IMR-90 (cell line): ENCODE measurements at regions of chr15 and their contacts with region 1.

Region 1: GRCh38 chr15:70488002-70488605 is 275.3 kb downstream of the UACA start:
- DNase-seq: peak; percentile 67
- ATAC-seq: peak; percentile 70
- H3K4me3 ChIP-seq: no peak overlapping the region
- H3K27ac ChIP-seq: no peak overlapping the region
- H3K4me1 ChIP-seq: peaks cover 32% of the 10 kb centered on the region
- H3K27me3 ChIP-seq: peaks cover 13% of the 10 kb centered on the region
- CTCF ChIP-seq: peak; percentile 95
- POLR2A ChIP-seq: 0 out of 2 replicates have a peak, but pooled peaks have one; percentile 50
- RAD21 ChIP-seq: peak; percentile 97

Region 2: DNA sequence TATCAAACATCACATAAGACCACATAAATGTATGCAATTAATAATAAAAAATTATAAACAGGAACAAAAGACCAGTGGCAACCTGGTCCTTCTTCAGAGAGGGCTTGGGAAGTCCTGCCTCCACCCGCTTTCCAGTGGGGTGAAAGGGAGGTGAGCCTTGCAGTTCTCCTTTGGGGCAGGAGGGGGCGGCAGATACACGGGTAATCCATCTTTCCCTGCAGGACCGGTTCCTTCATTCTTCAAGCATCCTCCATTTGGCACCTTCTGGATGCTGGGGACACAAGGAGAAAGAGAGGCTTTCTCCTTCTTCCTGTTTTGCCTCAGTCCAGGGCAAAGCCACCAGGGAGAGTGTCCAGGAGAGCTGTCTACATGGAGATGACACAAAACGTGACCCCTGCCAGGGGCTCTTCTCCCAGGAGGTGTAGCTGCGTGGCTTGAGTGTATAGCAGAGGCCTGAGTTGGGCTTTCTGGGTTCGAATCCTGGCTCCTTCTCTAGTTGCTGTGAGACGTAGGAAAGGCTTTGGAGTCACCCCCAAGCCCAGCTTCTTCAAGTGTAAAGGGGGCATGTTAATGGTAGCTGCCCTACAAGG is 1012.2 kb before region 1 on chr15:
- CTCF ChIA-PET with region 1: no interaction called
- POLR2A ChIA-PET with region 1: no interaction called
- dilution Hi-C with region 1: no loop called
- in situ Hi-C with region 1: loop called (anchors 10 kb)
- intact Hi-C with region 1: loop called (anchors 1 kb)
- DNase-seq: peak; percentile 63
- ATAC-seq: peak; percentile 93
- H3K4me3 ChIP-seq: no peak overlapping the region
- H3K27ac ChIP-seq: no peak overlapping the region
- H3K4me1 ChIP-seq: peaks cover 9% of the 10 kb centered on the region
- H3K27me3 ChIP-seq: peaks cover 11% of the 10 kb centered on the region
- CTCF ChIP-seq: peak; percentile 92
- POLR2A ChIP-seq: no peak
- RAD21 ChIP-seq: peak; percentile 94

Region 3: GRCh38 chr15:69523010-69524001 is 964.8 kb before region 1 on chr15:
- CTCF ChIA-PET with region 1: interaction called, 3 read pairs
- POLR2A ChIA-PET with region 1: no interaction called
- dilution Hi-C with region 1: no loop called
- in situ Hi-C with region 1: no loop called
- intact Hi-C with region 1: loop called (anchors 1 kb)
- DNase-seq: peak; percentile 72
- ATAC-seq: peak; percentile 98
- H3K4me3 ChIP-seq: no peak overlapping the region
- H3K27ac ChIP-seq: no peak overlapping the region
- H3K4me1 ChIP-seq: no peaks in the 10 kb centered on the region
- H3K27me3 ChIP-seq: peaks cover 25% of the 10 kb centered on the region
- CTCF ChIP-seq: peak; percentile 83
- POLR2A ChIP-seq: no peak
- RAD21 ChIP-seq: peak; percentile 90

Region 4: DNA sequence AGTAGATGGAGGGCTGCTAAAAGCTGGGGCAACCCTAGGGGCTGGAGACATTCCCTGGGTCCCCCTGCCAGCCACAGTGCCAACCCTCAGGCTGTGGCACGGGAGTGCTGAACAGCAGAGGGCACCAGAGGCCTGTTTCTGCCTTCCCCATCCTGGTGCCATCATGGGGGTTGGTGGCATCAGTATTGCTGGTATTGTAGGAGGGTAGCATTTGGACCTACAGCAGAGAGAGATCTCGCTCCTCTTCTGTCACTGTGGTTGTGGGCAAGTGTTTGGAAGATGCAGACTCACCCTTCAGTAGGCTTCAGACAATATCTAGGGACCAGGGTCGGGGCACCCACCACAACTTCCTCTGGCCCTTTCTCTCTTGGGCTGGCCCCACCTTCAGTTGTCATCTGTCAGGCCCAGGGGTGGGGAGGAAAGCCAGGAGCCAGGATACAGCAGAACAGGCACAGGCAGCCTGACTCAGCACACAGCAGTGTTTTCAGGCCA is 912.0 kb before region 1 on chr15:
- CTCF ChIA-PET with region 1: no interaction called
- POLR2A ChIA-PET with region 1: no interaction called
- dilution Hi-C with region 1: no loop called
- in situ Hi-C with region 1: loop called (anchors 10 kb)
- intact Hi-C with region 1: loop called (anchors 2 kb)
- DNase-seq: no peak
- ATAC-seq: peak; percentile 74
- H3K4me3 ChIP-seq: no peak overlapping the region
- H3K27ac ChIP-seq: no peak overlapping the region
- H3K4me1 ChIP-seq: no peaks in the 10 kb centered on the region
- H3K27me3 ChIP-seq: peaks cover 65% of the 10 kb centered on the region
- CTCF ChIP-seq: peak; percentile 59
- POLR2A ChIP-seq: no peak
- RAD21 ChIP-seq: peak; percentile 74

Region 5: GRCh38 chr15:69729161-69729748 is 758.8 kb before region 1 on chr15:
- CTCF ChIA-PET with region 1: no interaction called
- POLR2A ChIA-PET with region 1: no interaction called
- dilution Hi-C with region 1: no loop called
- in situ Hi-C with region 1: loop called (anchors 10 kb)
- intact Hi-C with region 1: loop called (anchors 1 kb)
- DNase-seq: peak; percentile 8
- ATAC-seq: no peak
- H3K4me3 ChIP-seq: no peak overlapping the region
- H3K27ac ChIP-seq: no peak overlapping the region
- H3K4me1 ChIP-seq: no peaks in the 10 kb centered on the region
- H3K27me3 ChIP-seq: peaks cover 56% of the 10 kb centered on the region
- CTCF ChIP-seq: peak; percentile 73
- POLR2A ChIP-seq: no peak
- RAD21 ChIP-seq: peak; percentile 79

Region 6: DNA sequence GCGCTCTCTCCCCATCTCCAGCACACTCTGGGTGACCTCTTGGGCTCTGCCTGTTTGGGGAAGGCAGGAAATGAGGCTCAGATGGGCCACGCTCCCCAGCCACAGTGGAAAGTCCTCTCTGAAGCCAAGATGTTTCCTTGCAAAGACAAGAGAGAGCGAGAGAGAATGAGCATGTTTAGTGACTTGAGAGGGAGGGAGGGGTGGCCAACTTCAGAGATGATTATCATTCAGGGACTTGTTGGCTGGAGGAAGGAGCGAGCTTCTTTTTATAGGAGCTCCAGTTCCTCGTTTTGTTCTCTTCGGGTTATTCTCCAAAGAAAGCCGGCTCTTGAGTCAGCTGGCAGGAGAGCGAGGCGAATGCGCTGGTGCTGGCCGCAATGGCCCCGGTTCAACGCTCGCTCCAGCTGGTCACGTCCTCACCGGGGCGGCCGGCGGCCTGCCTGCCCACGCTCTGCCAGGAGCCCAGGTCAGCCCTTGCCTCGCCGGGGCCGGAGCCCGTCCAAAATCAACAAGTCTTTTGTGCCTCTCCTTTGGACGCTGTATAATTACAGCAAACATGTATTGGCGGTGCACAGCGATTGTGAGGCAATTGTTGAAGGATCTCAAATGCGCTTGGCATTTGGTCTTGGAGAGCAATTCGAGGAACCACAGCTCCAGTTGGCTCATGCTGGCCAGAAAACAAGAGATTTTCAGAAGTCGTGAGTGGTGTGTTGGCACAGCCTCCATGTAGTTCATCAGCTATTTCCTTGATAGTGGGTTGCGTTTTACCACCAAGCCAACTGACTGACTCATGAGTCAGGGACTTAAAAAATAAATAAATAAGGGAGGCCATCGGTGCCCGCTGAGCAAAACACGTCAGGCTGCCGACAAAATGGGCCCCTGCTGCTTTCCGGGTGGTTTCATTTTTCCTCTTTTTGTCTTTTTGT is 13.4 kb before region 1 on chr15:
- CTCF ChIA-PET with region 1: interaction called, 7 read pairs
- POLR2A ChIA-PET with region 1: no interaction called
- dilution Hi-C with region 1: no loop called
- in situ Hi-C with region 1: no loop called
- intact Hi-C with region 1: loop called (anchors 2 kb)
- DNase-seq: peak; percentile 96
- ATAC-seq: peak; percentile 87
- H3K4me3 ChIP-seq: no peak overlapping the region
- H3K27ac ChIP-seq: peak overlapping the region; percentile 72
- H3K4me1 ChIP-seq: peaks cover 16% of the 10 kb centered on the region
- H3K27me3 ChIP-seq: peaks cover 8% of the 10 kb centered on the region
- CTCF ChIP-seq: 0 out of 2 replicates have a peak, but pooled peaks have one; percentile 2
- POLR2A ChIP-seq: peak; percentile 35; the same call in 1 of the 2 replicates
- RAD21 ChIP-seq: no peak